AG04449 (cell line): ENCODE measurements at regions of chr1 and their contacts with region 1.

Region 1: DNA sequence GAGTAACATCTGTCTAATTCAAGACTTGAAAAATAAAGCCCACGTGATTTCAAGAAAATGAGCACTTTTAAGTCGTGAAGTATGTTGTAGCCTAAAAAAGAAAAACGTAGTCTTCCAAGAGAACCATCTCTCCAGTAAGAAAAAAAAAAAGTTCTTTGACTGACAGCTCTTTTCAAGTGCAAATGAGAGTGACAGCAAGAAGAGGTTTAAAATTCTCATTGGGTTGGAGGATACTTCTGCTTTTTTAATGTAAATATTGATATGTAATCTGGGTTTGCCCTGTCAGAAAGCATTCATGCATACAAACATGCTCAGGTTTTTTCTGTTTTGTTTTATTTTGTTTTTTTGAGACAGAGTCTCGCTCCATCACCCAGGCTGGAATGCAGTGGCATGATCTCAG is 32.3 kb upstream of the PRDM2 start:
- DNase-seq: no peak
- H3K4me3 ChIP-seq: no peak overlapping the region
- CTCF ChIP-seq: no peak

Region 2: GRCh38 chr1:13539683-13540082 is 128.0 kb before region 1 on chr1:
- CTCF ChIA-PET with region 1: no interaction called
- POLR2A ChIA-PET with region 1: no interaction called
- DNase-seq: no peak
- H3K4me3 ChIP-seq: no peak overlapping the region
- CTCF ChIP-seq: no peak

Region 3: DNA sequence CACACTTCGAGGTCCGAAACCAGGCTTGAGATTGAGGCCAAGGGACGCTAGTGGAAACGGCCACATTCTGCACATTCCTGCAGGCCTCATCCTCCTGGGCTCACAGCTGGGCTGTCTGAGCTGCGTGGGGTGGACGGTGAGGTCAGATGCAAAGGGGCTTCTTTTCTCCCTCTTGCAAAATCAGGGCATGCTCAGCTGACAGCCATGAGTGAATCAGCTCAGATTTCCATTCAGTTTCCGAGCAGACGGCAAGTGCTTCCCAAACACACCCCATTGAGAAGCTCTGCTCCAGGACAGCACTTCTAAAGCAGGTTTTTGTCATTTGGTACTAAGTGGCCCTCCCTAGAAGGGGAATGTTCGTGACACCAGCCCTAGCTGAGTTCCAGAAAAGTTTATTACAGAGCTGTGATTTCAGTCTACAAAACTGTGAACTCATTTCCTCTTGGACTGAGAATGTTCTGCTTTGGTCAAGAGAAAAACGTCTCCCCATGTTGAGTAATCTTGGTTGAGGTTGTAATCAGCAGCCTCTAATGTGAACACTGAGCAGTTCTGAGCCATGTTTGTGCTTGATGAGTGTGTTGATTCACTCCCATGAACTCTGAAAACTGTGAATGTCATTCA is 74.1 kb before region 1 on chr1:
- CTCF ChIA-PET with region 1: no interaction called
- POLR2A ChIA-PET with region 1: no interaction called
- DNase-seq: no peak
- H3K4me3 ChIP-seq: no peak overlapping the region
- CTCF ChIP-seq: no peak

Region 4: DNA sequence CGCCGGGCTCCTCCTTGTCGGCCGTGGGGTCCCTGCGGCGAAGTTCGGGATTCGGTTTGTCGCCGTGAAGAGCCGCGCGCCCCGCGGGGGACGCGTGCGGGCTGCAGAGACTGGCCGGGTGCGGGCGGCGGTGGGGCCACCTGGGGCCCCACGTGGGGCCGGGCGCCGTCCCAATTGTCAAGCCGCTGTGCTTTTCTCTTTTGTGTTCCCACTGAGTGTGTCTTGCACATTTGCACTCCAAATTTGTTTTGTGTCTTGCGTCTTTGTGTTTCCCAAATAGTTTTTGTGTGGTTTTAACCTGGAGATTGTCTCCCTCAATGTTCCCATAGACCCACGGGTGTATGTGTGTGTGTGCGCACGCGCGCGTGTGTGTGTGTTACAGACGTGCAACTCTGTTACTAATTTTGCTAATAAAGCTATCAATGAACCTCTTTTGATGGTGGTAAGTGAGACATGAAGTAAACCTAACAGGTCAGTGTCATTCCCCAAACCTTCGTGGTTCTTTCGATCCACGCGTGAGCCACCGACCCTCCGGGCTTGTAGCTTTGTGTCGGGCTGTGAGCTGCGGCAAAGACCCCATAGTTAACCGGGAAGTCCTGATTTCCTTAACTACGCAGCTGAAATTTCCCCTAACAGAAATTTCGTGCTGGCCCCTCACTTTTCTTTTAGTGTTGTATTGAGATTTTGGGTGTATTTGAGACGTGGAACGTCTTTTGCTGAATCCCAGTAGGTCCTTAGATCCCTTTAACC is 33.0 kb after region 1 on chr1:
- CTCF ChIA-PET with region 1: no interaction called
- POLR2A ChIA-PET with region 1: no interaction called
- DNase-seq: no peak
- H3K4me3 ChIP-seq: peak overlapping the region; percentile 71
- CTCF ChIP-seq: no peak

Region 5: DNA sequence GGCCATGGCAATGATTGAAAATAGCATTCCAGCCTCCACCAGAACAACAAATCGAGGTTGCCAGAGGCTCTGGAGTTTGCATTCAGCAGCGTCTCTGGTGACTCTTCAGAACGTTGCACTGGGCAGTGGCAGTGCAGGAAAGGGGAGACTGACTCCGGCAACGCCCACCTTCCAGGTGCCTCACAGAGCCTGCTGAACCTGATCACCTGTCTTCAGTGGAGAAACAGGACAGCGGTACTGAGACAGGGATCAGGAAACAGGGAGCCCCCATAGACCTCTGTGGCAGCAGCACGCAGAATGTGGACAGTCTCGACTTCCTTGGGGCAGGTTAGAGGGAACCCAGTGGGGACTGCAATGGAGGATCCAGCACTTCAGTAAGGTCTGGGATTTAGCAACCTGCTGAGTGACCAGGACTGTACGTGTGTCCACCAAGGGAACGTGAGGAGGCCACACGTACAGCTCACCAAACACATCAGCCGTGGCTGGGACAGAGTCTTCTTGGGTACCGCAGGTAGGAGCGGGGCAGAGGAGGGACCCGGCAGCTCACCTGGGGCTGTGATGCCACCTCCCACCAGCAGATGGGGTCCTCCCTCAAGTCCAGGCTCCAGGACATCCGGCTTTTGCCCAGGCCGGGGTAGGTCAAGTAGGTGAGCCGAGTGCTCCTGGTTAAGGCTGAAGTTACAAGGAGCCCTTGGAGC is 160.9 kb after region 1 on chr1:
- CTCF ChIA-PET with region 1: interaction called, 31 read pairs
- POLR2A ChIA-PET with region 1: no interaction called
- DNase-seq: no peak
- H3K4me3 ChIP-seq: no peak overlapping the region
- CTCF ChIP-seq: peak; percentile 35

Region 6: DNA sequence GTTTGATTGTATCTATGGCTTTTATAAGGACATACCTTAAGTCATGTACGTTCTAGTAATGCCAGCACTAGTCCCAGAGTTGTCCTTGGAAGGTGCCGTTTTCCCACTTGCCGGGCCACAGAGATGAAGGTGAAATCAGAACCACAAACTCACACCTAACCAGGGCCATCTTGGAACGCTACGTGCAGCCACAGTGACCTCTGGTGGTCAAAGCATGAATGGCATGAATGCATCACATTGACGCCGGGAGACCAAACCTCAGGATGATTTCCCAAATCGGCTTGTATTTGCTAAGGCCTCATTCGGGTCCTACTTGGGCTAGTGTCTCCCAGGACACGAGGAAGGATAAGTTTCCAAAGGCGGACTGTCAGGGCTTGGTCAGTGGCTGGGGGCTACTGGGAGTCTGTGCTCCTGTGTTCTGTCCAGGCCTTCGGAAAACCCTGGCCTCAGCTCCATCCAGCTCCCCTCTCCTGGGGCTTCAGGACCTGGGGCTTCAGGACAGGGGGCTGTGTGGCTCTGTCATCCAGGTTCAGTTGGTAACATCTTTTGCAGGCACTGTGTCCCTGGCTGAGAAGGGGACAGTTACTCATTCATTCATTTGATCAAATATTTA is 292.8 kb after region 1 on chr1:
- CTCF ChIA-PET with region 1: interaction called, 10 read pairs
- POLR2A ChIA-PET with region 1: no interaction called
- DNase-seq: no peak
- H3K4me3 ChIP-seq: no peak overlapping the region
- CTCF ChIP-seq: peak; percentile 85